Activated naive CD4-positive, alpha-beta T cell treated with anti-CD3 and anti-CD28 coated beads, Interleukin-2, amount 10 ng/mL, durations not matched to agents 7 days and 5 days (primary cell): ENCODE measurements at regions of chr9 and their contacts with region 1.

Region 1: GRCh38 chr9:126500684-126501382 is 112.9 kb upstream of the LMX1B start:
- DNase-seq: peak; percentile 77
- H3K4me3 Mint-ChIP-seq: no peak overlapping the region
- H3K27ac Mint-ChIP-seq: no peak overlapping the region
- H3K4me1 Mint-ChIP-seq: peaks cover 2% of the 10 kb centered on the region
- H3K27me3 Mint-ChIP-seq: peaks cover 41% of the 10 kb centered on the region

Region 2: GRCh38 chr9:126558051-126558665 is 57.3 kb after region 1 on chr9:
- CTCF ChIA-PET with region 1: interaction called, 109 read pairs
- DNase-seq: peak; percentile 75
- H3K4me3 Mint-ChIP-seq: no peak overlapping the region
- H3K27ac Mint-ChIP-seq: no peak overlapping the region
- H3K4me1 Mint-ChIP-seq: no peaks in the 10 kb centered on the region
- H3K27me3 Mint-ChIP-seq: peaks cover 27% of the 10 kb centered on the region

Region 3: DNA sequence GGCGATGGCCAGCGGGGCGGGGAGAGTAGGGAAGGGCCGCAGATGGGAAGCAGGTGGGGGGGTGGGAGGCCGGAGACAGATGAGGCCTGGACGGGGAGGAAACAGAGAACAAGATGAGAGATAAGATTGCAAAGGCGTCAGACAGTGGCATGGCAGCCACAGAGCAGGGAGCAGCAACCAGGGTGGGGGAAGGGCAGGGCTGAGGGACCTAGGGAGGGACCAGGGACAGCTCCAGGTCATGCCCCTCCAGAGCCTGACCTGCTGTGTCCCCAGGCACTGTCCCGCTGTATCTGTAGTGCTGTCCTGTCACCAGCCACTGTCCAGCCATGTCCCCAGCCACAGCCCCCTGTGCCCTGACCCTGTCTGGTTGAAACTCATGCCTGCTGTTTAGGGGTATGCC is 63.3 kb after region 1 on chr9:
- CTCF ChIA-PET with region 1: interaction called, 13 read pairs
- DNase-seq: no peak
- H3K4me3 Mint-ChIP-seq: no peak overlapping the region
- H3K27ac Mint-ChIP-seq: no peak overlapping the region
- H3K4me1 Mint-ChIP-seq: no peaks in the 10 kb centered on the region
- H3K27me3 Mint-ChIP-seq: peaks cover 66% of the 10 kb centered on the region